ENCODE measurements at regions of chr14 and their contacts with region 1.

Region 1: GRCh38 chr14:37874429-37875191 is 279.2 kb downstream of the TTC6 start:
- ATAC-seq: peak; percentile 49 to 91 (median 72)
- H3K4me3 ChIP-seq: no peak overlapping the region
- H3K27ac ChIP-seq: no peak overlapping the region
- H3K4me1 ChIP-seq: peaks cover 2 to 4% of the 10 kb centered on the region in 2 donors

Region 2: DNA sequence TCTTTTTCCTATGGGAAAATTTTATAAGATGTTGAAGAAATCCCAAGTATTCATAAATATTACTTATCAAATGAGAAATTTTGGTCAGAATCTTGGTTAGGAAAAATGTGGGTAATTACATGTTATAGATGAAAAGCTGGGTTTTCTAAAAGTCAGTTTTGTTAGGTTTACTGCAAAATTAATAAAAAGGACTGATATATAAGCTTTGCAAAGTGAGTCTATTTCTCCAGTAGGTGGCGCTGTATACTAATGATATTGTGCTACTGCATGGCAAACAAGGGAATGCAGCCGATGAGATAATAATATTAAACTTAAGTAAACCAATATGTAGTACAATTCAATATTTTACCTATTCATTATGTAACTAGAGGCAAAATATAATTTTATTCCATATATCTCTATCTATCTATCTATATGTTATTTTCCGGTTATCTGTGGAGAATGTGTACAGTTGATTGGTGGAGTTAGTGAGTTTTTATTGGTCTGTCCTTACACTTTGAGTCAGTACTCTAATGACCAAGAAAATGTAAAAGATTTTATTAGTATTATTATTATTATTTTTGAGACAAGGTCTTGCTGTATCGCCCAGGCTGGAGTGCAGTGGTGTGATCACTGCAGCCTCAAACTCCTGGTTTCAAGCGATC is 643.9 kb before region 1 on chr14:
- in situ Hi-C with region 1: loop called in 2 of 9 experiments (anchors 25 kb)
- ATAC-seq: peak in 4 of 8 experiments; percentile 57 to 83 (median 77)
- H3K4me3 ChIP-seq: no peak overlapping the region
- H3K27ac ChIP-seq: no peak overlapping the region
- H3K4me1 ChIP-seq: no peaks in the 10 kb centered on the region

Region 3: GRCh38 chr14:37246427-37246914 is 628.1 kb before region 1 on chr14:
- in situ Hi-C with region 1: loop called in 3 of 9 experiments (anchors 10 to 25 kb)
- ATAC-seq: peak in 3 of 8 experiments; percentile 16 to 39 (median 32)
- H3K4me3 ChIP-seq: no peak overlapping the region
- H3K27ac ChIP-seq: no peak overlapping the region
- H3K4me1 ChIP-seq: no peaks in the 10 kb centered on the region

Region 4: GRCh38 chr14:37709419-37710195 is 165.0 kb before region 1 on chr14:
- in situ Hi-C with region 1: loop called in 3 of 9 experiments (anchors 5 to 10 kb)
- ATAC-seq: no peak
- H3K4me3 ChIP-seq: no peak overlapping the region
- H3K27ac ChIP-seq: no peak overlapping the region
- H3K4me1 ChIP-seq: no peaks in the 10 kb centered on the region

Region 5: GRCh38 chr14:38616959-38617358 is 742.3 kb after region 1 on chr14:
- in situ Hi-C with region 1: no loop called
- ATAC-seq: no peak
- H3K4me3 ChIP-seq: no peak overlapping the region
- H3K27ac ChIP-seq: no peak overlapping the region
- H3K4me1 ChIP-seq: no peaks in the 10 kb centered on the region